ENCODE measurements at regions of chr6 and their contacts with region 1.

Region 1: DNA sequence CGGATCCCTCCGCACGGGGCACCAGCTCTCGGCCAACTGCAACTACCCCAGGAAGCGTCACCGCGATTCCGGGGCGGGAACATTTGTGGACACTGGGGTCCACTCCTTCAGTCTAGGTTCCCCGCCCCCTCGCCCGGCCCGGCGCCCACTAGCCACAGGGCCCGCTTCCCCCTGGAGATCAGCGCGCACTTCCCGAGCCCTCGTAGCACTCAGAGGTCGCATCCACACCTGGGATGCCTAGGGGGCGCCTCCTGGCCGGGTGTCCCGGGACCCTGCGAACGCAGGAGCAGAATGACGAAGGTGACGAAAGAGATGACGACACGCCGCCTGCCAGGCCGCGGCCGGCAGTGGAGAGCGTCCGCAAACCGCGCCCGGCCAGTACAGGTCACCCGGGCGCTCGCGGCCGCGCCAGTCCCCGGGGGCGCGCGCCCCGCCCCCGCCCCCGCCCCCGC is 309 bp upstream of the AIG1 start:
- DNase-seq: peak; percentile 64
- H3K4me3 Mint-ChIP-seq: peak overlapping the region; percentile 86
- H3K27ac Mint-ChIP-seq: peak overlapping the region; percentile 81
- H3K4me1 Mint-ChIP-seq: peaks cover 16% of the 10 kb centered on the region
- H3K27me3 Mint-ChIP-seq: no peaks in the 10 kb centered on the region

Region 2: GRCh38 chr6:142627474-142627873 is 432.9 kb before region 1 on chr6:
- intact Hi-C with region 1: no loop called
- DNase-seq: no peak
- H3K4me3 Mint-ChIP-seq: no peak overlapping the region
- H3K27ac Mint-ChIP-seq: no peak overlapping the region
- H3K4me1 Mint-ChIP-seq: peaks cover 1% of the 10 kb centered on the region
- H3K27me3 Mint-ChIP-seq: no peaks in the 10 kb centered on the region

Region 3: DNA sequence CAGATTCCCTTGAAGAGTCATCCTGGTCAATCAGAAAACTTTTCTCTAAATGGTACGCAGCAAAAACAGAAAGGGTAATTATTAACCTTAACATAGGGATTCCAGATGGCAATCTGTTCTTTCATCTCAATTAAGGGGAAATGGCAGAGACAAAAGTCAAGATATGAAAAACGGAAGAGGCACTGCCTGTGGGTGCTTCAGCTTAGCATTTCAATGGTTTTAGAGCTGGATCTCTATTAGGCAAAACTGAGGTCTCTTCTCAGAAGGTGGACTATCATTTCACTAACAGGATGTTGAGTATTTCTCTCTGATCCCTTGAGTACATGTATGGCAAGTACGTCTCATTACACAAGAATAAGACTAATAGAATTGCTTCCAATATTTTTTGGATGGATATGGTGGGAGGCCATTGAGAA is 412.3 kb before region 1 on chr6:
- intact Hi-C with region 1: no loop called
- DNase-seq: no peak
- H3K4me3 Mint-ChIP-seq: no peak overlapping the region
- H3K27ac Mint-ChIP-seq: no peak overlapping the region
- H3K4me1 Mint-ChIP-seq: no peaks in the 10 kb centered on the region
- H3K27me3 Mint-ChIP-seq: no peaks in the 10 kb centered on the region

Region 4: DNA sequence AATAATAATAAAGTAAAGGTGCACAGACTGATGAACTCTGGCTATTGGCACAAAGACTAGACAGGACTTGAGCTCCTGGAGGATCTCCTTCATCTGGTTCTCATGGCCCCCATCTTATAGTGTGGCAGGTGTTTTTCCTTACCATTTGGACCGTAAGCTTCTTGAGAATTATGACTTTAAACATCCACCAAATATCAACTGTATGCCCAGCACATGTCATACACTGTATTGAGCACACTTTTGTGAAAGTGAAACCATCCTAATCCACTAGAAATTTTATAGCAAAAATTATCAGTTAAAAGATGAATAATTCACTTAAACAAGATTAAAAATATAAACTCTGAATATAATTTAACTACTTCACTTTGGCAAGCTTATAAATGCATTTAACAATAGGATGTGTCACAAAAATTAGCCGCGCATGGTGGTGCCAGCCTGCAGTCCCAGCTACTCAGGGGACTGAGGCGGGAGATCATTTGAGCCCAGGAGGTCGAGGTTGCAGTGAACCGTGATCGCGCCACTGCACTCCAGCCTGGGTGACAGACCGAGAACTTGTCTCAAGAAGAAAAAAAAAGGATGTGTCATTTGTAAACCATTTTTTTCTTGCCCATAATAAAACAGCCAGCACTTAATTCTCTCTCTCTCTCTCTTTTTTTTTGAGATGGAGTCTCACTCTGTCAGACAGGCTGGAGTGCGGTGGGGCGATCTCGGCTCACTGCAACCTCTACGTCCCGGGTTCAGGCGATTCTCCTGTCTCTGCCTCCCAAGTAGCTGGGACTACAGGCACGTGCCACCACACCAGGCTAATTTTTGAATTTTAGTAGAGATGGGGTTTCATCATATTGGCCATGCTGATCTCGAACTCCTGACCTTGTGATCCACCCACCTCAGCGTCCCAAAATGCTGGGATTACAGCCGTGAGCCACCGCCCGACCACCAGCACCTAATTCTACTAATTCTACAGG is 124.5 kb before region 1 on chr6:
- intact Hi-C with region 1: no loop called
- DNase-seq: no peak
- H3K4me3 Mint-ChIP-seq: peak overlapping the region; percentile 51
- H3K27ac Mint-ChIP-seq: peak overlapping the region; percentile 80
- H3K4me1 Mint-ChIP-seq: peaks cover 66% of the 10 kb centered on the region
- H3K27me3 Mint-ChIP-seq: no peaks in the 10 kb centered on the region

Region 5: DNA sequence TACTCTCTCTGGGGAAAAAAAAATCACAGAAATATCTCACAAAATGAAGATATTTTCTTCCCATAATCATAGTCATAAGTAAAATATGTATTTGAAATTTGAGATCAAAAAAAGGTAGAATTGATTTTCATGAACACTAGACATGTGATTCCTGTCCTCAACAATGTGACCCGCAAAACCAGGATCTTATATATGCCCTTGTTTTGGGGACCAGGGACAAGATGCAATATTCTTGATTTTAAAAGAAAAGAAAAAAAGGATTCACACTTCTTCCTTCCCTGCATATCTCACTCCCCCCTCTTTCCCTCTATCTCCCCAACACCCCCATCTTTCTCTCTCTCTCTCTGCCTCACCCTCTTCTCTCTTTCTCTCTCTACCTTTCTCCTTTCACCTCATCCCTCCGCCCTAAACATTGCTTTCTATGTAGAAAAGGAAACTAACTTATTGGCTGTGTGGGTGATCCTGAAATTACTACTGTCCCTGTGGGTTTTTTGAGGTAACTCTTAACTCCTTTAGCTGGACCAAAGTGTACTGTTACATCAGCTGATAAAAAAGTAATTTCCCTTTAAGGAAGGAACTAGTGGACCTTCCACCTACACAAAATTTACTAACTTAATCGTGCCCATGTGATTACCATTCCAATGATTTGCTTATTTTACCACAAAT is 85.9 kb after region 1 on chr6:
- intact Hi-C with region 1: loop called (anchors 5 kb)
- DNase-seq: no peak
- H3K4me3 Mint-ChIP-seq: no peak overlapping the region
- H3K27ac Mint-ChIP-seq: no peak overlapping the region
- H3K4me1 Mint-ChIP-seq: peaks cover 1% of the 10 kb centered on the region
- H3K27me3 Mint-ChIP-seq: no peaks in the 10 kb centered on the region

Region 6: GRCh38 chr6:143441680-143442545 is 381.5 kb after region 1 on chr6:
- intact Hi-C with region 1: loop called (anchors 5 kb)
- DNase-seq: peak; percentile 11
- H3K4me3 Mint-ChIP-seq: peak overlapping the region; percentile 15
- H3K27ac Mint-ChIP-seq: peak overlapping the region; percentile 92
- H3K4me1 Mint-ChIP-seq: peaks cover 59% of the 10 kb centered on the region
- H3K27me3 Mint-ChIP-seq: no peaks in the 10 kb centered on the region

Region 7: DNA sequence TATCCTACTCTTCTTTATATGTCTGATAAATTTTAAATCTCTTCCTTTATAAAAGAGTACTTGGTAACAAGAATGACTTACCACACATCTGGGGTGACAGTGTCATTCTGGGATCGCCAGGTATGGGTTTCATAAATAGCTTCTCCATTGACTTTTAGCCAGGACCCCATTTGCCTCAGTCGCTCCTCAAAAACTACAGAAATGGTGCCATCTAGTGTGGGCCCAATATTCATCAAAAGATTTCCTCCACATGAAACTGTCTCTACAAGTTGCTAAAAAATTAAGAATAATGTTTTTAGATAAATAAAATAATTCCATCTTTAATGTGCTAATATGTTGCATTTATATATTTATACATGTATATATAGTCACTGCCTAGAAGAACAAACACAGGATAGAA is 441.5 kb after region 1 on chr6:
- intact Hi-C with region 1: no loop called
- DNase-seq: no peak
- H3K4me3 Mint-ChIP-seq: no peak overlapping the region
- H3K27ac Mint-ChIP-seq: no peak overlapping the region
- H3K4me1 Mint-ChIP-seq: peaks cover 21% of the 10 kb centered on the region
- H3K27me3 Mint-ChIP-seq: no peaks in the 10 kb centered on the region